H1 (cell line): ENCODE measurements at regions of chr12 and their contacts with region 1.

Region 1: GRCh38 chr12:49264738-49265515 is at the start of gene TUBA1C:
- DNase-seq: peak; percentile 85 to 97
- H3K4me3 ChIP-seq: peak within 1 kb of the TSS; percentile 80 to 94 (median 90)
- H3K27ac ChIP-seq: peak within 1 kb of the TSS; percentile 71; the same call in 1 of the 2 replicates
- H3K4me1 ChIP-seq: peaks cover 0 to 2% (median 0%) of the 10 kb centered on the region in 4 experiments; a peak in 4 of 7 replicates
- H3K27me3 ChIP-seq: no peaks in the 10 kb centered on the region
- CTCF ChIP-seq: no peak
- EP300 ChIP-seq: no peak
- POLR2A ChIP-seq: peak; percentile 97 to 99
- RAD21 ChIP-seq: no peak
- total RNA-seq, gene TUBA1C: 504 and 533 TPM in 2 replicates

Region 2: GRCh38 chr12:49188914-49189367 is 76.0 kb before region 1 on chr12 and contains the start of gene TUBA1A:
- CTCF ChIA-PET with region 1: no interaction called
- POLR2A ChIA-PET with region 1: interaction called, 11 read pairs
- DNase-seq: peak; percentile 89 to 95
- H3K4me3 ChIP-seq: peak within 1 kb of the TSS; percentile 57 to 93 (median 84)
- H3K27ac ChIP-seq: peak within 1 kb of the TSS; percentile 76
- H3K4me1 ChIP-seq: no peaks in the 10 kb centered on the region; a peak in 2 of 7 replicates
- H3K27me3 ChIP-seq: no peaks in the 10 kb centered on the region
- CTCF ChIP-seq: no peak
- EP300 ChIP-seq: no peak
- POLR2A ChIP-seq: peak; percentile 93 to 96
- RAD21 ChIP-seq: no peak
- total RNA-seq, gene TUBA1A: 283 and 290 TPM in 2 replicates

Region 3: GRCh38 chr12:49244176-49244575 is 20.8 kb before region 1 on chr12:
- CTCF ChIA-PET with region 1: interaction called, 3 read pairs
- POLR2A ChIA-PET with region 1: interaction called, 27 read pairs
- DNase-seq: no peak
- H3K4me3 ChIP-seq: no peak overlapping the region
- H3K27ac ChIP-seq: no peak overlapping the region
- H3K4me1 ChIP-seq: no peaks in the 10 kb centered on the region
- H3K27me3 ChIP-seq: no peaks in the 10 kb centered on the region
- CTCF ChIP-seq: no peak
- EP300 ChIP-seq: no peak
- POLR2A ChIP-seq: no peak
- RAD21 ChIP-seq: no peak

Region 4: DNA sequence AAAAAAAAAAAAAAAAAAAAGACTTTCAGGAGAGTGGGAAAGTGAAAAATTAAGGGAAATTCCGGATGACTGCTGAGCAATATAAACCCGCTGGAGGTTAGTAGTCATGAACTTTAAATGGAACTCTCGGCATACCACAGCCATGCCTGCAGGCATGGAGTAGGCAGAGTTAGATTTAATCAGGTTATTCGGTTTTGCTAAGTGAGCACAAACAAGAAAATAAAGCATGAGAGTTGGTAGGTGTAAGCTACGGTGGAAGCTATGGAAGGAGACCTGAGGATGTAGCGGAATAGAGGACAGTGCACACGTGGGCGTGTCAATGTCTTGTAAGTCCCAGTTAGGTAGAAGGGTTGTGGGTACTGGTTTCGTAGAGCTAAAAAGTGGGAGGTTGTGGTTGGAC is 11.8 kb before region 1 on chr12:
- CTCF ChIA-PET with region 1: interaction called, 6 read pairs
- POLR2A ChIA-PET with region 1: interaction called, 39 read pairs
- DNase-seq: no peak
- H3K4me3 ChIP-seq: no peak overlapping the region
- H3K27ac ChIP-seq: no peak overlapping the region
- H3K4me1 ChIP-seq: no peaks in the 10 kb centered on the region
- H3K27me3 ChIP-seq: no peaks in the 10 kb centered on the region
- CTCF ChIP-seq: no peak
- EP300 ChIP-seq: no peak
- POLR2A ChIP-seq: no peak
- RAD21 ChIP-seq: no peak

Region 5: DNA sequence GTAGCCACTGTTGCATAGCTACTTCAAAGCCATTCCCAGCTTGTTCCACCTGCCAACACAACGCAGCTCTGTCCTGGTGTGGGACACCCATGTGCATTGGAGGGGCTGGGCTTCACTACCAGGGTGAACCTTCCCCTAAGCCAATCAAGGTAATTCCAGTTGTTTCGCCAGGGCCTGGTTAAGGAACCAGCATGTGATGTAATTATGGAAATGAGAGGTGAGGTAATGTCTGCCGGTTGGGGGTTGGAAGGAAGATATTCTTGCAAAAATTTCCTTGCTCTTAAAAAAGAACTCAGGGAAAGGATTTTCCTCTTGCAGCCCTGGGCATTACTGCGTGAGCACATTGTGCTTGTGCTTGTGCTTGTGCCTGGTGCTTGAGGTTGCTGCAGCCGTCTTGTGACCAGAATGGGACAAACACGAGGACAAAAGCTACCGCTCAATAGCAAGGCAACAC is 14.8 kb after region 1 on chr12:
- CTCF ChIA-PET with region 1: interaction called, 5 read pairs
- POLR2A ChIA-PET with region 1: interaction called, 111 read pairs
- DNase-seq: no peak
- H3K4me3 ChIP-seq: no peak overlapping the region
- H3K27ac ChIP-seq: no peak overlapping the region
- H3K4me1 ChIP-seq: peaks cover 0 to 7% (median 5%) of the 10 kb centered on the region in 4 experiments; a peak in 3 of 7 replicates
- H3K27me3 ChIP-seq: no peaks in the 10 kb centered on the region
- CTCF ChIP-seq: no peak
- EP300 ChIP-seq: no peak
- POLR2A ChIP-seq: no peak
- RAD21 ChIP-seq: no peak

Region 6: GRCh38 chr12:49296034-49296835 is 31.3 kb after region 1 on chr12:
- CTCF ChIA-PET with region 1: interaction called, 22 read pairs
- POLR2A ChIA-PET with region 1: interaction called, 48 read pairs
- DNase-seq: peak in 1 of 2 experiments; percentile 91
- H3K4me3 ChIP-seq: peak overlapping the region; percentile 4 to 59 (median 34); a peak in 7 of 8 replicates
- H3K27ac ChIP-seq: no peak overlapping the region
- H3K4me1 ChIP-seq: peaks cover 0 to 36% (median 17%) of the 10 kb centered on the region in 4 experiments; a peak in 6 of 7 replicates
- H3K27me3 ChIP-seq: peaks cover 50 to 72% (median 68%) of the 10 kb centered on the region in 4 experiments
- CTCF ChIP-seq: peak in 2 of 3 experiments; percentile 89; a peak in 3 of 4 replicates
- EP300 ChIP-seq: no peak
- POLR2A ChIP-seq: no peak
- RAD21 ChIP-seq: peak; percentile 31 to 42; a peak in 2 of 4 replicates